Gastrocnemius medialis (tissue), 4 donors: ENCODE measurements at regions of chr14 and their contacts with region 1.

Region 1: DNA sequence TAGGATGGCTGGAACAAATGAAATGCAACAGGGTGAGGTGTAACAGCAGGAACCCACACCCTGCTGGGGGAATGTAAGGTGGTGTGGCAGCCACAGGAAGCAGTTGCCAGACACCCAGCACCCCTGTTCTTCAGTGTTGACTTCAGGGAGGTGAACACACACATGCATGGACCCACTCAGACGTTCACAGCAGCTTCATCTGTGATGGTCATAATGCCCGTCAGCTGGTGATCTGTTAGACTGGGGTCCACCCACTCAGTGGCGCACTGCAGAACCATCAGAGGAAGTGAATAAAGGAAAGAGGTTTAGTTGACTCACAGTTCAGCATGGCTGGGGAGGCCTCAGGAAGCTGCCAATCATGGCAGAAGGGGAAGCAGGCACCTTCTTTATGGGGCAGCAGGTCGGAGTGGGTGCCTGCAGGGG is 22.7 kb upstream of the TEX22 start:
- DNase-seq: no peak
- ATAC-seq: no peak
- H3K4me3 ChIP-seq: no peak overlapping the region
- H3K27ac ChIP-seq: no peak overlapping the region
- H3K4me1 ChIP-seq: no peaks in the 10 kb centered on the region
- H3K27me3 ChIP-seq: no peaks in the 10 kb centered on the region
- CTCF ChIP-seq: no peak
- POLR2A ChIP-seq: no peak

Region 2: GRCh38 chr14:105519946-105520698 is 144.5 kb after region 1 on chr14:
- in situ Hi-C with region 1: loop called in 1 of 4 experiments (anchors 5 kb)
- intact Hi-C with region 1: no loop called
- DNase-seq: no peak
- ATAC-seq: no peak
- H3K4me3 ChIP-seq: no peak overlapping the region
- H3K27ac ChIP-seq: no peak overlapping the region
- H3K4me1 ChIP-seq: no peaks in the 10 kb centered on the region
- H3K27me3 ChIP-seq: peaks cover 0 to 12% (median 10%) of the 10 kb centered on the region in 3 donors
- CTCF ChIP-seq: no peak
- POLR2A ChIP-seq: no peak